ENCODE measurements at regions of chr9 and their contacts with region 1.

Region 1: GRCh38 chr9:122350638-122351355 is 20.0 kb upstream of the PTGS1 start:
- DNase-seq: peak; percentile 72 to 88
- H3K4me3 ChIP-seq: no peak overlapping the region
- H3K4me3 Mint-ChIP-seq: no peak overlapping the region
- H3K27ac Mint-ChIP-seq: no peak overlapping the region
- H3K4me1 ChIP-seq: no peaks in the 10 kb centered on the region; the same call in 1 of the 2 replicates
- H3K4me1 Mint-ChIP-seq: peaks cover 6% of the 10 kb centered on the region
- H3K27me3 ChIP-seq: no peaks in the 10 kb centered on the region
- H3K27me3 Mint-ChIP-seq: peaks cover 4% of the 10 kb centered on the region
- CTCF ChIP-seq: peak; percentile 94 to 95

Region 2: DNA sequence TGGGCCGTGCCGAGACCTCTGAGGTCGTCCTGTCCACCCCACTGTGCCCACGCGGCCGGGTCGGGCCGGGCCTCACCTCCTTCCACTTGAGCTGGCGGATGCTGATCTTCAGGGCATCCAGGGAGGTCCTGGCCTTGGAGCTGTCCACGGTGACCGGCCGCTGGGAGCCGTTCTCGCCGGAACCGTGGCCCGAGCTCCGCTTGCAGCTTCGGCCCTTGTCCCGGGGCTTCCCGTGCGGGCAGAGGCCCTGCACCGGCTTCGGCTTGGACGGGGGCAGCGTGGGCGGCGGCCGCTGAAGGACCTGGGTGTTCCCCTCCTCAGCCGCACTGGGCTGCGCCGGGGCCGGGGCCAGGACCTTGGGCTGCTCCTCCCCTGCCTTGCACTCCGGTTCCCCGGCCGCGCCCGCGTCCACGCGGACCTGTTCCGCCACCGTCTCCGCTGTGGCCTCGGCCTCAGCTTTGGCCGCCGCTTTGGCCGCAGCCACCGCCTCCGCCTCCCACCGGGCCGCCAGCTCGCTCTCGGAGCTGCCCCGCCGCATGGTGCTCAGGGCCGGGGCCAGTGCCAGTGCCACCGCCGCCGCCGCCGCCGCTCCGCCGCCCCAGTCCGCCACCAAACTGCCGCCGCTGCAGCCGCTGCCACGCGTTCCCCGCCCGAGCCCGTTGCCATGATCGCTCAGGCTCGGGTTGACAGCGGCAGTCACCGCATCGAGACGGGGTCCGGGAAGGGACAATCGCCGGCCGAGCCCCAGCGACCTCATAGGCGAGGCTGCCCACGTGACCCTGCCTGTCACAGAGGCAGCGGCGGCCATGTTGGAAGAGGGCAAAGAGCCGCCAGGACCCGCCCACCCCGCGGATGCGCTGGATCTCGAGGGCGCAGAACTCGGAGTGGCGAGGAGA is 257.9 kb before region 1 on chr9 and contains the start of gene TTLL11:
- CTCF ChIA-PET with region 1: interaction called, 93 read pairs
- POLR2A ChIA-PET with region 1: no interaction called
- intact Hi-C with region 1: loop called (anchors 1 kb)
- DNase-seq: peak; percentile 95
- H3K4me3 ChIP-seq: peak within 1 kb of the TSS; percentile 87
- H3K4me3 Mint-ChIP-seq: peak within 1 kb of the TSS; percentile 76
- H3K27ac Mint-ChIP-seq: peak within 1 kb of the TSS; percentile 7
- H3K4me1 ChIP-seq: no peaks in the 10 kb centered on the region
- H3K4me1 Mint-ChIP-seq: peaks cover 11% of the 10 kb centered on the region
- H3K27me3 ChIP-seq: no peaks in the 10 kb centered on the region
- H3K27me3 Mint-ChIP-seq: peaks cover 7% of the 10 kb centered on the region
- CTCF ChIP-seq: no peak
- total RNA-seq, gene TTLL11: 4.4 and 4.7 TPM in 2 replicates

Region 3: GRCh38 chr9:122099271-122099869 is 251.4 kb before region 1 on chr9:
- CTCF ChIA-PET with region 1: interaction called, 93 read pairs
- POLR2A ChIA-PET with region 1: no interaction called
- intact Hi-C with region 1: loop called (anchors 1 kb)
- DNase-seq: peak; percentile 76 to 82
- H3K4me3 ChIP-seq: no peak overlapping the region
- H3K4me3 Mint-ChIP-seq: no peak overlapping the region
- H3K27ac Mint-ChIP-seq: no peak overlapping the region
- H3K4me1 ChIP-seq: no peaks in the 10 kb centered on the region
- H3K4me1 Mint-ChIP-seq: no peaks in the 10 kb centered on the region
- H3K27me3 ChIP-seq: no peaks in the 10 kb centered on the region
- H3K27me3 Mint-ChIP-seq: peaks cover 9% of the 10 kb centered on the region
- CTCF ChIP-seq: peak; percentile 78 to 81

Region 4: GRCh38 chr9:122264360-122265148 is 86.2 kb before region 1 on chr9 and contains the starts of genes MRRF and RBM18:
- CTCF ChIA-PET with region 1: interaction called, 4 read pairs
- POLR2A ChIA-PET with region 1: no interaction called
- intact Hi-C with region 1: loop called (anchors 1 kb)
- DNase-seq: peak; percentile 92 to 94
- H3K4me3 ChIP-seq: peak within 1 kb of the TSS; percentile 65
- H3K4me3 Mint-ChIP-seq: peak within 1 kb of the TSS; percentile 87
- H3K27ac Mint-ChIP-seq: peak within 1 kb of the TSS; percentile 99
- H3K4me1 ChIP-seq: 0 out of 2 replicates have a peak, but pooled peaks cover 3% of the 10 kb centered on the region
- H3K4me1 Mint-ChIP-seq: peaks cover 28% of the 10 kb centered on the region
- H3K27me3 ChIP-seq: no peaks in the 10 kb centered on the region
- H3K27me3 Mint-ChIP-seq: no peaks in the 10 kb centered on the region
- CTCF ChIP-seq: no peak
- total RNA-seq, gene MRRF: 61.7 and 64.6 TPM in 2 replicates
- total RNA-seq, gene RBM18: 20.6 and 23.1 TPM in 2 replicates

Region 5: GRCh38 chr9:122318284-122318683 is 32.5 kb before region 1 on chr9:
- CTCF ChIA-PET with region 1: no interaction called
- POLR2A ChIA-PET with region 1: no interaction called
- intact Hi-C with region 1: no loop called
- DNase-seq: no peak
- H3K4me3 ChIP-seq: no peak overlapping the region
- H3K4me3 Mint-ChIP-seq: no peak overlapping the region
- H3K27ac Mint-ChIP-seq: no peak overlapping the region
- H3K4me1 ChIP-seq: no peaks in the 10 kb centered on the region
- H3K4me1 Mint-ChIP-seq: no peaks in the 10 kb centered on the region
- H3K27me3 ChIP-seq: no peaks in the 10 kb centered on the region
- H3K27me3 Mint-ChIP-seq: no peaks in the 10 kb centered on the region
- CTCF ChIP-seq: no peak

Region 6: DNA sequence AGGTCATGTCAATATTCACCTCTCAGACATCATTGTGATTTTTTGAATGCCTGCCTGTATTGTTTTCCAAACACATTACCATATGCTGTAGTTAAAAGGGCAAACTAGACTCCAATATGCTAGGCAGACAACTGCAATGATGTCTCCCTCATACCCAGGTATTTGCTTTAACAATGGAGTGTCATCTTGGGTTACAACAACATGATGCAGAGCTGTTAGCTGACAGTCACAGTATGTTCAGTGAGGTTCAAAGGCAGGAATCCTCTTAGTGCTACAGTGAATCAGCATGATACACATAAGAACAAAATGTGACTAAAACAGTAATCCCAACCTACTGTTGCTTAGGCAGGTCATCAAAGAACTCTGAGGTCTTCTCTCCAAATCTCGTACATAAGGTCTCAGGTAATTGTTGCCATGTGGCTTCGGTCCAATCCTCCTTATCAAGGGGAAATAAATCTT is 102.9 kb after region 1 on chr9:
- CTCF ChIA-PET with region 1: no interaction called
- POLR2A ChIA-PET with region 1: no interaction called
- intact Hi-C with region 1: loop called (anchors 1 kb)
- DNase-seq: no peak
- H3K4me3 ChIP-seq: no peak overlapping the region
- H3K4me3 Mint-ChIP-seq: no peak overlapping the region
- H3K27ac Mint-ChIP-seq: no peak overlapping the region
- H3K4me1 ChIP-seq: no peaks in the 10 kb centered on the region
- H3K4me1 Mint-ChIP-seq: no peaks in the 10 kb centered on the region
- H3K27me3 ChIP-seq: no peaks in the 10 kb centered on the region
- H3K27me3 Mint-ChIP-seq: peaks cover 5% of the 10 kb centered on the region
- CTCF ChIP-seq: no peak

Region 7: DNA sequence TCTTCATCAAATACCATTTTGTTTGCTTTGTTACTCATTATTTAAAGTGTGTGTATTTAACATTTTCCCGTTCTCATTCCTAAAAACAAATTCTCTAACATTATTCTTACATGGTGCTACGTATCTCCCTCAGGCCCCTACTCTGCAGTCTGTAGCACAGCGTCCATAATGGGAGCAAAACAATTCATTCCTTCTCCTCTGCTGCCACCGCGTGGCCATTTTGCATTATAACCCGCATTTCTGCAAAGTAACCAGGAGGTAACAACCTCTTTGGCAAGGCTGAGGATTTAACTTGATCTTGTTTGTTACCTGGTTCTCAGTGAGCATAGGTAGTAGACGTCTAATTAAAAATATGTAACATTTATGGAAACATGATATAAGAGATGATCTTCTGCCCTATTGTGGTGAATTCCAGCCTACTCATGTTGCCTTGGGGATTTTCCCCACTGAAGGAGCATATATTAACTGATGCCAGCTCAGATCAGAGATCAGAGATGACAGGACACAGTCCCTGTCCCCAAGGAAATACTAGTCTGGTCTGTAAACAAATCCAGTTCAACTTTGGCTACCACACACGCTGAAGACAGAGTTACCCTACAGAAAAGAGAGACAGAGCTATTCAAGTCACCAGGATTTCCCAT is 459.6 kb after region 1 on chr9:
- CTCF ChIA-PET with region 1: interaction called, 3 read pairs
- POLR2A ChIA-PET with region 1: no interaction called
- intact Hi-C with region 1: loop called (anchors 5 kb)
- DNase-seq: peak; percentile 73 to 74
- H3K4me3 ChIP-seq: no peak overlapping the region
- H3K4me3 Mint-ChIP-seq: no peak overlapping the region
- H3K27ac Mint-ChIP-seq: no peak overlapping the region
- H3K4me1 ChIP-seq: peaks cover 9% of the 10 kb centered on the region; the same call in 1 of the 2 replicates
- H3K4me1 Mint-ChIP-seq: no peaks in the 10 kb centered on the region
- H3K27me3 ChIP-seq: no peaks in the 10 kb centered on the region
- H3K27me3 Mint-ChIP-seq: no peaks in the 10 kb centered on the region
- CTCF ChIP-seq: peak; percentile 55 to 83